ENCODE measurements at regions of chr1 and their contacts with region 1.

Region 1: GRCh38 chr1:12124693-12125421 is 41.9 kb upstream of the TNFRSF1B start:
- DNase-seq: peak; percentile 69 to 91 (median 80)
- ATAC-seq: peak; percentile 84
- H3K4me3 ChIP-seq: no peak overlapping the region
- H3K4me3 Mint-ChIP-seq: no peak overlapping the region
- H3K27ac ChIP-seq: no peak overlapping the region
- H3K27ac Mint-ChIP-seq: no peak overlapping the region
- H3K4me1 ChIP-seq: peaks cover 27% of the 10 kb centered on the region
- H3K4me1 Mint-ChIP-seq: peaks cover 29% of the 10 kb centered on the region
- H3K27me3 ChIP-seq: no peaks in the 10 kb centered on the region
- H3K27me3 Mint-ChIP-seq: no peaks in the 10 kb centered on the region
- CTCF ChIP-seq: peak; percentile 97

Region 2: DNA sequence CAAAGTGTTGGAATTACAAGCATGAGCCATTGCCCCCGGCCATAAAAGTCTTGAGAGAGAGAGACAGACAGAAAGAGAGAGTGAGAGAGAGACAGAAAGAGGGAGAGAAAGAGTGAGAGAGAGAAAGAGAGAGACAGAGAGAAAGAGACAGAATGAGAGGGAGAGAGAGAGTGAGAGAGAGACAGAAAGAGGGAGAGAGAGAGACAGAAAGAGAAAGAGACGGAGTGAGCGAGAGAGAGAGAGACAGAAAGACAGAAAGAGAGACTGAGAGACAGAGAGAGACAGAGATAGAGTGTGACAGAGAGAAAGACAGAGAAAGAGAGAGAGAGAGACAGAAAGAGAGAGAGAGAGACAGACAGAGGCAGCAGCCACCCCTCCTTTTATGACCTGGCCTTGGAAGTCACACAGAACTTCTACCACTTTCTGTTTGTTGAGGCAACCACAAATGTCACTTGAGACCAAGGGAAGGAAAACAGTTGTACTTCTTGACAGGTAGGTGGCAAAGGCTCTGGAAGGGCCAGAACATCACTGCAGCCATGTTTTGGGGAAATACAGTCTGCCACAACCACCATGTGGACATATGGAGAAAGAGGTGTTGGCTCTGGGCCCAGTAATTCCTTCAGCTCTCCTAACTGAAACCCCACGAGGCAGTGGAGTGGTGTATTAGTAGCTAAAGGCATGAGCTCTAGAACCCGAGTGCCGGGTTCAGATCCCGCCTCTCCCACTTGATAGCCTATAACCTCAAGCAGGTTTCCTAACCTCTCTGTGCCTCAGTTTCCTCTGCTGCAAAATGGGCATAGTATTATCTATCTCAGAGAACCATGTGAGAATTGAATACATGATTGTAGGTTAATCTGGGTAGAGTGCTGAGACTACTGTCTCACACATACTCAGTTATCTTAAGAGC is 11.2 kb before region 1 on chr1:
- CTCF ChIA-PET with region 1: interaction called, 19 read pairs
- POLR2A ChIA-PET with region 1: no interaction called
- intact Hi-C with region 1: no loop called
- DNase-seq: no peak
- ATAC-seq: no peak
- H3K4me3 ChIP-seq: no peak overlapping the region
- H3K4me3 Mint-ChIP-seq: no peak overlapping the region
- H3K27ac ChIP-seq: no peak overlapping the region
- H3K27ac Mint-ChIP-seq: peak overlapping the region; percentile 0
- H3K4me1 ChIP-seq: no peaks in the 10 kb centered on the region
- H3K4me1 Mint-ChIP-seq: peaks cover 3% of the 10 kb centered on the region
- H3K27me3 ChIP-seq: no peaks in the 10 kb centered on the region
- H3K27me3 Mint-ChIP-seq: no peaks in the 10 kb centered on the region
- CTCF ChIP-seq: no peak

Region 3: DNA sequence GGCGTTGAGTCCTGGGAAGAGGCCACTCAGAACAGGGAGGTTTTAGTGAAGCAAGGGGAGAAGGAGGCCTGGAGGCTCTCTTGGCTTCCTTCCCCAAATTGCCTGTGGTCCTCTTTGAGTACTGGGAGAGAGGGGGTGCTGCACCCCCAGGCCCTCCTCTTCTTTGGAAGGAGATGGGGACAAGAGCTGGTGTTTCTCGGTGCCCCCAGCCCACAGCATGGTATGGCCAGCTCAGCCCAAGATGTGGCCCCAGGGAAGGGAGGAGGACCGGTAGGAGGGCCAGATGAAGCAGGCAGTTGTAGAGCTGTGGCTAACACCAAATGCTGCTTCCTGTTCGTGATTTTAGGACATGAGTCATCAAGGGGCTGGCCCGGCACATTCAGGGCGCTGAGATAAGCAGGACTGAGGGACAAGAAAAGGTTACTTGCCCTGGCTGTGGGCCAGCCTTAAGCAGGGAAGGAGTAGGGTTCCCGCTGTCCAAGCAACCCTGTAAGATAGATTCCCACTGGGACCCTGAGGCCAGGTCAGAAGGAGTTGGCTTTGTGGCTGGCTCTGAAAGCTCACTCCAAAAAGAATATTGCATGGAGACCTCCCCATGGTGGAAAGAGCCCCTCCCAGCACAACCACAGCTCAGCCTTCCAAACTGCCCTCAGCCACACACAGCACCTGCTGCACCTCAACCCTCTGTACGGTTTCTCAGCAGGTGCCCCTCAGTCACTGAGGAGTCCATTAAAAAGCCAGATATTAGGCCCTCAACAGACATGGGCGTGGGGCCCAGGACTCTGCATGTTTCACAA is 37.0 kb after region 1 on chr1:
- CTCF ChIA-PET with region 1: interaction called, 47 read pairs
- POLR2A ChIA-PET with region 1: no interaction called
- intact Hi-C with region 1: loop called in 1 of 2 experiments (anchors 5 kb)
- DNase-seq: peak; percentile 42 to 94 (median 79)
- ATAC-seq: peak; percentile 77
- H3K4me3 ChIP-seq: no peak overlapping the region
- H3K4me3 Mint-ChIP-seq: peak overlapping the region; percentile 53
- H3K27ac ChIP-seq: peak overlapping the region in 1 of 2 experiments; percentile 69
- H3K27ac Mint-ChIP-seq: peak overlapping the region; percentile 82
- H3K4me1 ChIP-seq: peaks cover 55% of the 10 kb centered on the region
- H3K4me1 Mint-ChIP-seq: peaks cover 63% of the 10 kb centered on the region
- H3K27me3 ChIP-seq: no peaks in the 10 kb centered on the region
- H3K27me3 Mint-ChIP-seq: no peaks in the 10 kb centered on the region
- CTCF ChIP-seq: no peak

Region 4: GRCh38 chr1:12184008-12184681 is 59.3 kb after region 1 on chr1:
- CTCF ChIA-PET with region 1: interaction called, 155 read pairs
- POLR2A ChIA-PET with region 1: interaction called, 14 read pairs
- intact Hi-C with region 1: loop called in 1 of 2 experiments (anchors 1 kb)
- DNase-seq: peak in 1 of 9 experiments; percentile 47
- ATAC-seq: no peak
- H3K4me3 ChIP-seq: no peak overlapping the region
- H3K4me3 Mint-ChIP-seq: no peak overlapping the region
- H3K27ac ChIP-seq: peak overlapping the region in 1 of 2 experiments; percentile 60
- H3K27ac Mint-ChIP-seq: peak overlapping the region; percentile 27
- H3K4me1 ChIP-seq: peaks cover 22% of the 10 kb centered on the region
- H3K4me1 Mint-ChIP-seq: peaks cover 47% of the 10 kb centered on the region
- H3K27me3 ChIP-seq: no peaks in the 10 kb centered on the region
- H3K27me3 Mint-ChIP-seq: no peaks in the 10 kb centered on the region
- CTCF ChIP-seq: no peak

Region 5: GRCh38 chr1:12229835-12230548 is 105.1 kb after region 1 on chr1 and contains the start of gene VPS13D:
- CTCF ChIA-PET with region 1: interaction called, 38 read pairs
- POLR2A ChIA-PET with region 1: no interaction called
- intact Hi-C with region 1: no loop called
- DNase-seq: peak; percentile 68 to 91 (median 84)
- ATAC-seq: peak; percentile 95
- H3K4me3 ChIP-seq: peak within 1 kb of the TSS; percentile 95 to 97
- H3K4me3 Mint-ChIP-seq: peak within 1 kb of the TSS; percentile 93
- H3K27ac ChIP-seq: peak within 1 kb of the TSS; percentile 50 to 70
- H3K27ac Mint-ChIP-seq: peak within 1 kb of the TSS; percentile 86
- H3K4me1 ChIP-seq: peaks cover 15% of the 10 kb centered on the region
- H3K4me1 Mint-ChIP-seq: peaks cover 30% of the 10 kb centered on the region
- H3K27me3 ChIP-seq: no peaks in the 10 kb centered on the region
- H3K27me3 Mint-ChIP-seq: no peaks in the 10 kb centered on the region
- CTCF ChIP-seq: peak; percentile 98
- total RNA-seq, gene VPS13D: 55.8 to 58.7 TPM

Region 6: DNA sequence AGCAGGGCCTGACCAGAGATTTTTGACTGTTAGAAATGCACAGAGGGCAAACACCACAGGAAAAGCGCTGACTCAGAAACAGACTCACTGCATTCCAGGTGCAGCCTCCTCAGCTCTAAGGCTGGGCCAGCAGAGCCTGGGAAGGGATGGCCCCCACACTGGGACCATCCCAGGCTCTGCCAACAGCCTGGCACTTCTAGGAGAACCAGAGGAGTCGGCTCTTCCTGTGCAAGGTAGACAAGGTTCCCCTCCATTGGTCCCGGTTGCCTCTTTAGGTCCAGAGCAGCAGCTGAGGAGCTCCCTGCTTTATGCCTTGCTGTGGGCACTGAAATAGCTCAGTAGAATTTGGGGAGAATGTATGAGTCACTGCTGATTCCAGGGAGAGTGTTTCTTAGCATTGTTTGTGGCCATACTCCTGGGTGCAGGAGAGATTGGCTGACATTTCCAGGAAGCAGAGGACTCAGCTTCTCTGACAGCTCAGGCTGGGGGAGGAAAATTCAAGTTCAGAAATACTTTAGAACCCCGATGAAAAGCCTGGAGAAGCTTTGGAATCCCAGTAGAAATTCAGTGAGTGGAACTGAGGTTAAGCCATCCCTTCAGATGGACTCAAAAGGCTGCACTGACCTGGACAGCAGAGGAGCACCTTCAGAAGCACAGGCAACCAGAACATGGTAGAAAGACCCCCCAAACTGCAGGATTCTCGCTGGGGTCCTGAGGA is 686.0 kb after region 1 on chr1:
- CTCF ChIA-PET with region 1: no interaction called
- POLR2A ChIA-PET with region 1: no interaction called
- intact Hi-C with region 1: no loop called
- DNase-seq: no peak
- ATAC-seq: no peak
- H3K4me3 ChIP-seq: no peak overlapping the region
- H3K4me3 Mint-ChIP-seq: no peak overlapping the region
- H3K27ac ChIP-seq: no peak overlapping the region
- H3K27ac Mint-ChIP-seq: no peak overlapping the region
- H3K4me1 ChIP-seq: no peaks in the 10 kb centered on the region
- H3K4me1 Mint-ChIP-seq: no peaks in the 10 kb centered on the region
- H3K27me3 ChIP-seq: peaks cover 0 to 2% of the 10 kb centered on the region in 2 experiments
- H3K27me3 Mint-ChIP-seq: peaks cover 22% of the 10 kb centered on the region
- CTCF ChIP-seq: no peak